Cardiac septum (tissue), 1 donor: ENCODE measurements at regions of chr4 and their contacts with region 1.

Region 1: DNA sequence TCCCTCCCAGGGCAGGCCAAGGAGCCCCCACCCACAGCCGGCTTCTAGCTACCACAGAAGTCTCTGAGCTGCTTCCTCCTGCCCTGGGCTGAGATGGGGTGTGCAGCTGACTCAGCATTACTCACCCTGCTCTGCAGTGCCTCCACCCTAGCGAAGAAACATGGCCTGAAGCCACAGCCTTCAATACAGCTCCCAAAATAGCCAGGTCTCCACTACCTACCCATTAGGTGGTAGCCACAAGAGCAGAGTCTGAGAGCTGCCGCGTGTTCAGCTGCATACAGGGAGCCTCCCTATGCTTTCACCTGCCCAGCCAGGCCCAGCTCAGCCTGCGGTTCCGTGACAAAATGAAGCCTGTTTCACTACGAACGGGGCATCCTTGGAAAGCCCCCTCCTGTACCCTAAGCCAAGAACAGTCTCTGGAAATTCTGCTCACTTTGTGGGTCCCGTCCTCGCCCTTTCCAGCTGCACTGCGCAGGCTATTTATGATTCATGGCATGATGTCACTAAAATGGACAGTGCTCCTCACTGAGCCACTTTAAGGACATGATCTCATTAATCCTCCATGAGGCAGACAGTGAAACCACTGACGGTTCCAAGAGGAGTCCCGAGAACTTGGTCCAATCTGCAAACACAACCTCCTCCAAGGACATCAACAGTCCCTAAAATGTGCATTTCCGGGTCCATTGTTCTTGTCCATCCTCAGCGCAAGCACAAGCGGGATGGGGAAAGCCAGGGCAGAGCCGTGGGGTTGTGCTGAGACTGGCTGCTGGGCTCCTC is 20.2 kb downstream of the WDR1 start:
- DNase-seq: peak; percentile 89

Region 2: GRCh38 chr4:10018818-10019461 is 77.4 kb before region 1 on chr4:
- intact Hi-C with region 1: no loop called
- DNase-seq: peak; percentile 98

Region 3: DNA sequence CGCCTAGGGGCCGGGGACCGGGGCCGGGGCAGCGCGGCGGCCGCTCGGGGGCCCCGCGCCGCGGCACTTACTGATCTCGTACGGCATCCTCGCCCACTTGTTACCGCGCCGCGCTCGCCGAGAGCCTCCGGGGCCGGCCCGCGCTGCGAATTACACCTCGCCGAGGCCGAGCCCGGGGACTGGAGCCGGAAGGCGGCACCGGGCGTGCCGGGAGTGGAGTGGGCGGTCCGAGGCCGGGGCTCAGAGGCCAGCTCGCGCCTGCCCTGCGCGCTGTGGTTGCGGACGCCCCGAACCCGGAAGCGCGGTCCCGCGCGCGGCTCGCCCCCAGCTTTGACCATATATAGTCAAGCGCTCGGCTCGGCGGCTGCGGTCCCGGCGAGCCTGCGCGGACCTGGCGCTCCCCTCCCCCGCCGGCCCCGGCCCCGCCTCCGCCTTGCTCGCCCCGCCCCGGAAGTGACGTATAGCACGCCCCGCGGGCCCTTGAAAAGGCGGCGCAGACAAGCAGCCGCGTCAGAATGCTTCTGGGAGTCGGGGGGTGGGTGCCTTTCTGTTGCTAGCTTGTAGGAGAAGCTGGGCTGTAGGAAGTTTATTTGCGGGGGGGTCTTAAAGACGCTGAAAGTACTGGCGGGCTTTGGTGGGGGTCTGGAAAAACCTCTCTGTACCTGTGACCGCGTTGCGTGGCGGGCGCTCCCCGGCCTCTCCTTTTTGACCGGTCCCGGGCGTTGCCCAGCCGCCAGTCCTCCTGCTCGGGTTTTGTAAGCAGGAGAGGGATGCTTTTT is 20.4 kb after region 1 on chr4 and contains the start of gene WDR1:
- intact Hi-C with region 1: loop called (anchors 2 kb)
- DNase-seq: peak; percentile 99
- total RNA-seq, gene WDR1: 245 TPM

Region 4: DNA sequence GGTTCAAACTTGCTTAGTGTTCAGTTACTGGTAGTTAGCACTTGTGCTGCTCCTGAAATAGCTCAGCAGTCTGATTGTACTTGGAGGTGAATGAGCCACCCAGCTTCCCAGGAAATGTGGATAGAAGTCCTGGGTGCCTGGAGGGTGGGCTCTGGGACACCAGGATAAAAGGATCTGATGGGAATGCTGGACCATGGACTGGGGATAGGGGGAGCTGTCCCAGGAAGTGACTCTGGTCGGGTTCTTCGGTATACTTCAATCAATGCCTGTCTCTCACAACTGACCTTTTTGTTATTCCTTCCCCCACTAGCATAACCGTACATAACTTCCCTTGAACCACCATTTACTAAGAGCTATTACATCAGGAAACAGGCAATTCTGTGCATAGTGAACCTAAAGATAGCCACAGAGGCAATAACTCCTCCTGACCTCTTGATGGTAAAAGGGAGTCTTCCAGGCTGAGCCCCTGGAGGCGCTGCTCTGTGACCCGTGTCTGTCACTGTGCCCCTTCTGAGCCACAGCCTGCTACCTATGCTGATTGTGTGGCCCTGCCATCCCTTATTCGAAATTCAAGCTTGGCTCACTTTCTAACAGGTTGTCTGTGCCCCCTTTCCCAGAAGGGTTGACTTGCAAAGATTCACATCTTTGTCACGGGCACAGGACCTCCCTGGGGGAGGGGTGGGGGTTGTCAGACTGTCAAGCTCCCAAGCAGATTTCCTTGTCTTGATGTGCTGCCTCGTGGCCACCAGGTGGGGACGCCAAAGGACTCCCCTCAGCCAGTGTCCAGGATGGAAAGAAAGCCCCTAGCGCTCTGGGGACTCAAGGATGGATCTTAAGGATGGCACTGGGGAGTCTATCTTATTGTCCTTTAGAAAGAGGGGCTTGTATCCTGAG is 44.7 kb after region 1 on chr4:
- intact Hi-C with region 1: no loop called
- DNase-seq: no peak

Region 5: GRCh38 chr4:10506077-10506476 is 409.7 kb after region 1 on chr4:
- intact Hi-C with region 1: no loop called
- DNase-seq: no peak